ENCODE measurements at regions of chr1 and their contacts with region 1.

Region 1: GRCh38 chr1:205961405-205961804 is 18.1 kb upstream of the SLC26A9 start:
- DNase-seq: no peak
- H3K4me3 ChIP-seq: no peak overlapping the region
- H3K27ac ChIP-seq: no peak overlapping the region
- H3K4me1 ChIP-seq: peaks cover 0 to 9% (median 4%) of the 10 kb centered on the region in 4 experiments; a peak in 4 of 7 replicates
- H3K27me3 ChIP-seq: no peaks in the 10 kb centered on the region
- CTCF ChIP-seq: no peak
- EP300 ChIP-seq: no peak
- POLR2A ChIP-seq: no peak
- RAD21 ChIP-seq: no peak

Region 2: DNA sequence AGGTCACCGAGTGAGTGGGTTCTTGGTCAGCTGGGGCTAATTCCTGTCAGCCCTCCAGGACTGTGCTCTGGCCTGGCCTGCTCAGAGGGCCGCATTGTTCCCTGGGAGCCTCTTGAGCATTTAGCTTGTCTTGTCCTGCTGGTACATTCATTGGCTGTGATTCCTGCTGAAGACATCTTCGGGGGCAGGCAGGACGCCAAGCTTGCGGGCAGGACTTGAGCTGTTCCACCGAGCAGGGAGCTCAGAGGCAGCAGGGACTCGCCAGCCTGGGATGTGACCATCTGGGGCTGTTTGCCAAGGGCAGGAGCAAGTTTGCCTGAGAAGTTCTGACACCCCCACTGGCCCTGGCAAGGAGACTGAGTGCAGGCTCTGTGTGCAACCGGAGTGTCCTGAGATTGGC is 11.1 kb before region 1 on chr1:
- CTCF ChIA-PET with region 1: interaction called, 12 read pairs
- POLR2A ChIA-PET with region 1: no interaction called
- DNase-seq: no peak
- H3K4me3 ChIP-seq: no peak overlapping the region
- H3K27ac ChIP-seq: no peak overlapping the region
- H3K4me1 ChIP-seq: peaks cover 0 to 6% (median 6%) of the 10 kb centered on the region in 4 experiments; a peak in 5 of 7 replicates
- H3K27me3 ChIP-seq: peaks cover 0 to 2% (median 0%) of the 10 kb centered on the region in 4 experiments; a peak in 2 of 7 replicates
- CTCF ChIP-seq: no peak
- EP300 ChIP-seq: no peak
- POLR2A ChIP-seq: no peak
- RAD21 ChIP-seq: no peak